ENCODE measurements at regions of chr12 and their contacts with region 1.

Region 1: GRCh38 chr12:32217354-32218310 is 111.0 kb downstream of the BICD1 start:
- DNase-seq: no peak
- ATAC-seq: no peak

Region 2: DNA sequence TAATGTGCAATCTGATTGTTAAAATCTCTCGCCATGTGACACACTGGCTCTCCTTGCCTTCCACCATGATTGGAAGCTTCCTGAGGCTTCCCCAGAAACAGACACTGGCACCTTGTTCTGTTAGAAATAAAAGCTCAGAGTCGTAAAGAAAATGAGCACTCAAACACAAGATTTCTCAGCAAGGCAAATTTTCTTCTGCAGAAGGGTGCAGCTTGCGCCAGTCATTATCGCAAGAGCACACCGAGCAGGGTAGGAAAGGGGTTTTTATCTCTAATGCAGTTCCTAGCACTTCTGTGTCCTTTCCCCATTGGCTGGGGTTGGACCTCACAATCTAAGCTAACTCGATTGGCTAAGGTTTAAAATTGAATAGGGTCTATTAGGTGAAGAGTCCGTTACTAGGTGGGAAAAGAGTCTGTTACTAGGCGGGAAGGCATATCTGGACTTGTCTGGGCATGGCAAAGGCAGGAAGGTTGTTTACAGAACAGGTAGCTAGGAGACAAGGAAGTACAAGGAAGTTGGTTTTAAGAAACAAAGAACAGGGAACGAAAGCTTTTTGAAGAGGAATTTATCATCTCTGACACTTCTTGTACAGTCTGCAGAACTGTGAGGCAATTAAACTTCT is 173.6 kb before region 1 on chr12:
- intact Hi-C with region 1: no loop called
- DNase-seq: no peak
- ATAC-seq: no peak

Region 3: DNA sequence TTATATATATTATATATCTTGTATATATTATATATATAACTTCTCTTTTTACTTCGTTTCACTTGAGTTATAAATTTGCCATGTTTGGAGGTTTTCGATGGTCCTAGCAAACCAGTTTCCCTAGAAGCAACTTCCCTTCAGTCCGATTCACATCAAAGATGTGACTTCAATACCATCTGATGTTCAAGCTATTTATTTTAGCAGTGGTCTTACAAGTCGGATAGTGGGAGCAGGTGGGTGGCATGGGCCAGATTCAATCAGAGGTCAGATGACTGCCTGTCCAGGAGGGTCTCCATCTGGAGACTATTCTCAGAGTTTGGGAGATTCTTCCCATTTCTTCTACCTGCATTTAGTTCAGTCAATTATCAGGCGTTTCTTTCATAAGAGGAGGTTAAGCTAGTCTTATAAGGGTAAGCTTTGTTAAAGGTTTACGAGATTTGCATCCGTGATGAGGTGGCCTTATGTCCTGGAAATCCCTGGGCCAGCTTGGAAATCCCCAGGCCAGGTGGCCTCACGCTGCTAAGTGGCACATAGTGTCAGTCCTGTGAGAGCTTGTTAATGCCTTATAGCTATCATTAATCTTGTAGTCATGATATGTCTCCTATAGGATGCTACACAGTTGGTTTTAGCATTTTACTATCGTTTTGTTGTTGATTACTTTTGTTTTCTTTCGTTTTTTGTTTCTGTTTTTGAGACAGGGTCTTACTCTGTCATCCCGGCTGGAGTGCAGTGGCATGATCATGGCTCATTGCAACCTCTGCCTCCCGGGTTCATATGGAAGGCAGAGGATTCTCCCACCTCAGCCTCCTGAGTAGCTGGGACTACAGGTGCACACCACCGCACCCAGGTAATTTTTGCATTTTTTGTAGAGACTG is 34.8 kb after region 1 on chr12:
- intact Hi-C with region 1: loop called in 1 of 2 experiments (anchors 5 kb)
- DNase-seq: no peak
- ATAC-seq: no peak

Region 4: DNA sequence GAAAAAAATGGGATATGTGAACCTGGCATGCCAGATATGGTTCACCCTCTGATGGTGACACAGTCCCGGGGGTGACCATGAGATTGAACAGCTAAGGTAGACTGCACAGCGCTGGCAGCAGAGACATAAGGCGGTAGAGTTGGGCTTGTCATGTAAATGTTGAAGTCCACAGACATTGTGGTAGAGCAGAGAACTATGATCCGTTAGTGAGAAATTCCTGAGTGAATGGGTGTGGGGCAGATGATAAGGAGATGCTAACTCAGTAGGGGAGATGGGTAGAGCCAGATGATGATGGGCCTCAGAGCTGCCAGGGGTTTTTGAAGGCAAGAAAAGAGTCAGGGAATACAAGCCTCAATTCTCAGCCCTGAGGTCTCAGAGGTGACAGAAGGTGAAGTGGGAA is 410.3 kb after region 1 on chr12:
- intact Hi-C with region 1: no loop called
- DNase-seq: no peak
- ATAC-seq: no peak

Measured in left colon (tissue), 2 donors.